Left colon (tissue), 2 donors: ENCODE measurements at regions of chr15 and their contacts with region 1.

Region 1: DNA sequence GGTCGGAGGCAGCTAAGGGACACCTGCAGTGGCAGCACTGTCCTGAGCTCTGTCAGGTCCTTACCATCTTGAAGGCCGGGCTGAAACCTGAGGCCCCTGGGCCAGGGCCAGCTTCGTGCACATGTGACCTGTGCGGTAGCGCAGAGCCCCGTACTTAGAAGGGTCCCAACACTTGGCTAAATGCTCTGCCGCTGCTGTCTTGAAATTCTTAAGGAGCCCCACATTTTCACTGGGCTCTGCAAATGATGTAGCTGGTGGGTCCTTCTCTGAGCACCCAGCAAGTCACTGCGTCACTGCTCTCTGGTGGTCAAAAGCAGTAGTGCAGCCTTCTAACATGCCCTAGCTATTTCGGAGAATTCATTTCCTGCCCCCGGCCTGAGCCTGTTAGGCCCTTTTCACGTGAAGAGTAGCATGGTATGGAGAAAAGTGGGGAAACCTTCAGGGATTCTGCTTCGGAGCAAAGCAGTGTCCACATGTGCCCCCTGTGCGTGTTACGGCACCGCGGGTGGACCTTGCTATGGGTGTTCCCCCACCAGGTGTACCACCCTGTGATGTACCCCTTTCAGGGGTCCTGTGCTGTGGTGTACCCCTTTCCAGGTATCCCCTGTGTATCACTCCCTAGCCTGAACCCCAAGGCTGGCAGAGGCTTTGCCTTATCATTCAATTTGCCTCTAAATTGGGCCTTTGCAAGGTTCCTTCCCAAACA is 79.7 kb downstream of the TMEM266 start:
- DNase-seq: peak in 1 of 2 donors; percentile 80
- ATAC-seq: peak; percentile 86

Region 2: GRCh38 chr15:76057332-76058000 is 82.1 kb before region 1 on chr15:
- intact Hi-C with region 1: loop called in 1 of 2 experiments (anchors 5 kb)
- DNase-seq: peak in 1 of 2 donors; percentile 13
- ATAC-seq: no peak